Activated CD4-positive, alpha-beta memory T cell treated with anti-CD3 and anti-CD28 coated beads for 36 hours (primary cell): ENCODE measurements at regions of chr3 and their contacts with region 1.

Region 1: GRCh38 chr3:130276203-130276803 is 69.2 kb upstream of the COL6A5 start:
- DNase-seq: no peak
- H3K4me3 Mint-ChIP-seq: no peak overlapping the region
- H3K27ac Mint-ChIP-seq: no peak overlapping the region
- H3K4me1 Mint-ChIP-seq: no peaks in the 10 kb centered on the region
- H3K27me3 Mint-ChIP-seq: peaks cover 18% of the 10 kb centered on the region

Region 2: DNA sequence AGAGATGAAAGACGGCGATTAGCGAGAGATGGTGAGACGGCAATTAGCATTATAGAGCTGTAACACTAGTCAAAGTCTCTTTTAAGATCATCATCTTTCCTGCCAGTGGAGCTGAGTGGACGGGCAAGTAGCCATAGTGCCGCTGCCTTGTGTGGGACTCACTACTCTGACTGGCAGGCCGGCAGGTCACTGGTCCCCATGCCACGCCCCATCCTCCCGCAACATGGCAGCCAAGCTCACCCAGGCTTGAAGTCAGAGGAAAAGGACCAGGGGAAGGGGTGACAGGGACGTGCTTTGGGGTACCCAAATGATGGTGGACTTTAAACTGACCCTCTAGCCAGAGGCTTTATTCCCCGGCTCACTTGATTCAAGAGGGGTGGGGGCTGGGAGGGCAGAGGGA is 24.6 kb after region 1 on chr3:
- CTCF ChIA-PET with region 1: no interaction called
- POLR2A ChIA-PET with region 1: no interaction called
- intact Hi-C with region 1: no loop called
- DNase-seq: no peak
- H3K4me3 Mint-ChIP-seq: no peak overlapping the region
- H3K27ac Mint-ChIP-seq: no peak overlapping the region
- H3K4me1 Mint-ChIP-seq: no peaks in the 10 kb centered on the region
- H3K27me3 Mint-ChIP-seq: no peaks in the 10 kb centered on the region

Region 3: GRCh38 chr3:130539005-130539404 is 262.7 kb after region 1 on chr3:
- CTCF ChIA-PET with region 1: interaction called, 19 read pairs
- POLR2A ChIA-PET with region 1: no interaction called
- intact Hi-C with region 1: loop called (anchors 1 kb)
- DNase-seq: peak; percentile 47
- H3K4me3 Mint-ChIP-seq: no peak overlapping the region
- H3K27ac Mint-ChIP-seq: no peak overlapping the region
- H3K4me1 Mint-ChIP-seq: no peaks in the 10 kb centered on the region
- H3K27me3 Mint-ChIP-seq: peaks cover 6% of the 10 kb centered on the region

Region 4: DNA sequence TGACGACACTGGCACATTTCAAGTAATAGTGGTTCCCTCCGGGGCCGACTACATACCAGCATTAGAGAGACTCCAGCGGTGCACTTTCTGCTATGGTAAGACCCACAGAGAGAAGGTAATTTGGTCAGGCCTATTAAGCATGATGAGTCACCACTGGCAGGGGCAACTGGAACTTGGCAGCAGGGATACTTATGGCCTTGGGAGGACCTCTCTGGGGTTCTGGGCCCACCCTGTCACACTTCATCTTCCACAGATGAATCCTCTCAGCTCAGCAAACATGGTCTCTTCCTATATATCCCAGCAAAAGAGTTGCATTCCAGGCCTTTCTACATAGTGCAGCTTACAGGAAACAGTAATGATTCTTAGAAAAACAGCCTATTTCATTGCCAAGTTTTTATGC is 382.4 kb after region 1 on chr3:
- CTCF ChIA-PET with region 1: no interaction called
- POLR2A ChIA-PET with region 1: no interaction called
- intact Hi-C with region 1: no loop called
- DNase-seq: no peak
- H3K4me3 Mint-ChIP-seq: no peak overlapping the region
- H3K27ac Mint-ChIP-seq: no peak overlapping the region
- H3K4me1 Mint-ChIP-seq: no peaks in the 10 kb centered on the region
- H3K27me3 Mint-ChIP-seq: no peaks in the 10 kb centered on the region